ENCODE measurements at regions of chr7 and their contacts with region 1.

Region 1: DNA sequence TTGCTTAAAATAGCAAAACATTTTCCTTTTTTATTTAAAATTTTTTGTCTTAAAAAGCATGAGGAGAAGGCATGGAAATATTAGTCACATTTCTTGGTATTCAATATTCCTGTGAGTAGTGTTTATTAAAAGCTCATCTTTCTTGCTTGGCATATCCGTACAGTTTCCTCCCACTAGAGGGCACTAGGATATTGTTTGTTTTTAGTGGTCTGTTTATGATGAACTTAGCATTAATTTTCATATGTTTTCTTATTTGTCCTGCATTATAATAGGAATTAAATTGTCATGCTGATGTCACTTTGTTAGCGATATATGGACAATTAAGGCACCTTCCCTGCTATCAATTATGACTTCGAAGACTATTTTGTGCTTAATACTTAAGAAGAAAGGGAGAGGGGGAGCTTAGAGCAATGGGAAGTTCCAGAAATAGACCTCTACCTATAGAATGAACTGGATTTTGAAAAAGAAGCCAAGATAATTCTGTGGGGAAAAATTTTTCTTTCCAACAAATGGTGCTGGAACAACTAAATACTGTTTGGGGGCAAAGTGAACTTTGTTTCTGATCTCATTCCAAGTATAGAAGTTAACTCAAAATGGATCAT is 91.0 kb upstream of the STRIP2 start:
- DNase-seq: peak; percentile 68
- H3K4me3 ChIP-seq: no peak overlapping the region
- H3K27ac ChIP-seq: no peak overlapping the region
- H3K4me1 ChIP-seq: no peaks in the 10 kb centered on the region
- H3K27me3 ChIP-seq: no peaks in the 10 kb centered on the region
- CTCF ChIP-seq: peak; percentile 48 to 54
- POLR2A ChIP-seq: no peak

Region 2: GRCh38 chr7:129332284-129333035 is 10.7 kb before region 1 on chr7:
- CTCF ChIA-PET with region 1: interaction called, 40 read pairs
- POLR2A ChIA-PET with region 1: no interaction called
- dilution Hi-C with region 1: no loop called
- intact Hi-C with region 1: no loop called
- DNase-seq: peak; percentile 58
- H3K4me3 ChIP-seq: no peak overlapping the region
- H3K27ac ChIP-seq: peak overlapping the region; percentile 38
- H3K4me1 ChIP-seq: peaks cover 5% of the 10 kb centered on the region
- H3K27me3 ChIP-seq: no peaks in the 10 kb centered on the region
- CTCF ChIP-seq: no peak
- POLR2A ChIP-seq: no peak

Region 3: GRCh38 chr7:129359638-129360037 is 16.4 kb after region 1 on chr7:
- CTCF ChIA-PET with region 1: interaction called, 25 read pairs
- POLR2A ChIA-PET with region 1: no interaction called
- dilution Hi-C with region 1: no loop called
- intact Hi-C with region 1: no loop called
- DNase-seq: no peak
- H3K4me3 ChIP-seq: no peak overlapping the region
- H3K27ac ChIP-seq: no peak overlapping the region
- H3K4me1 ChIP-seq: no peaks in the 10 kb centered on the region
- H3K27me3 ChIP-seq: no peaks in the 10 kb centered on the region
- CTCF ChIP-seq: no peak
- POLR2A ChIP-seq: no peak

Region 4: DNA sequence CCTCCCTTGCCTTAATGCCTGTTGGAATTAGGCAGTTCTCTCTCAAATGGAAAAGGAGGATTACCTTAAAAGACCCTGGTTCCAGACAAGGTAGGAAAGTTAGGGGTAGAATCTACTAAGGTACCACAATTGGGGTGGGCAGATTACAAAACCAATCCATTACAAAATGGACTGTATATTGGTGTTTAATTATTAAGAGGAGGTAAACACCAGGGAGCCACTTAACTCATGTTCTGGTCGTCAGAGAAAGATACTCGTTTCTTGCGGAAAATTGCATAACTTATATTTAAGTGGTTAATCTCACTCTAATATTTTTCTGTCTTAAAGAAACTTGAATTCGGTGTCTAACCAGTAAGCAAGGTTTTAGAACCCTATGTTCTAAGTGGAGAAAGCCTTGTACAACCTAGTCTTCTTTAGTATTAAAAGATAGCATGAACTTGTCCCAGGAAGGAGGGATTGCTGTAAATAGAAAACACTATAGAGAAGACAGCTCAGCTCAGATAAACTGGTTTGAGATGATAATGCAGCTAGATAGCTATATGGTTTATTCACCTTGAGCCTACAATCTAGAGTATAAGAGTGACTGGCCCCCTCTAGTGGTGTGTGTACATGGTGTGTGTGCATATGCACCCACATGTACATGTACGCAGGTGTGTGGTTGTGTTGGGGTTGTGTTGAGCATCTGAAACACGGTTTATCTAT is 33.0 kb after region 1 on chr7:
- CTCF ChIA-PET with region 1: interaction called, 28 read pairs
- POLR2A ChIA-PET with region 1: no interaction called
- dilution Hi-C with region 1: no loop called
- intact Hi-C with region 1: no loop called
- DNase-seq: peak; percentile 39
- H3K4me3 ChIP-seq: no peak overlapping the region
- H3K27ac ChIP-seq: no peak overlapping the region
- H3K4me1 ChIP-seq: peaks cover 10% of the 10 kb centered on the region
- H3K27me3 ChIP-seq: no peaks in the 10 kb centered on the region
- CTCF ChIP-seq: peak; percentile 38 to 57
- POLR2A ChIP-seq: no peak

Region 5: DNA sequence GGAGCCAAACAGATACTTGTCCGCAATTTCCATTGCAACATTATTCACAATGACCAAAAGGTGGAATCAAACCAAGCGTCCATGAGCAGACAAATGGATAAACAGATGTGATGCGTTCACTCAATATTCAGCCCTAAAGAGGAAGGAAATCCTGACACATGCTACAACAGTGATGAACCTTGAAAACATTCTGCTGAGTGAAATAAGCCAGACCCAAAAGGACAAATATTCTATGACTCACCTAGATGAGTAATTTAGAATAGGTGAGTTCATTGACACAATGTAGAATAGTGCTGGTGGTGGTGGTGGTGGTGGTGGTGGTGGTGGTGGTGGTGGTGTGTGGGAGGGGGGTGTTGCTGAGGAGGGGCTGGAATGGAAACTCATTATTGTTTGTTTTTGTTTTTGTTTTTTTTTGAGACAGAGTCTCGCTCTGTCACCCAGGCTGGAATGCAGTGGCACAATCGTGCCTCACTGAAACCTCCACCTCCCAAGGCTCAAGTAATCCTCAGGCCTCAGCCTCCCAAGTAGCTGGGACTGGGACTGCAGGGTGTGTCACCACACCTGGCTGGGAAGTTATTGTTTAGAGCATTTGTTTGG is 187.7 kb after region 1 on chr7:
- CTCF ChIA-PET with region 1: no interaction called
- POLR2A ChIA-PET with region 1: no interaction called
- dilution Hi-C with region 1: no loop called
- intact Hi-C with region 1: no loop called
- DNase-seq: peak; percentile 47
- H3K4me3 ChIP-seq: no peak overlapping the region
- H3K27ac ChIP-seq: no peak overlapping the region
- H3K4me1 ChIP-seq: no peaks in the 10 kb centered on the region
- H3K27me3 ChIP-seq: no peaks in the 10 kb centered on the region
- CTCF ChIP-seq: no peak
- POLR2A ChIP-seq: no peak

Region 6: GRCh38 chr7:129635300-129636029 is 292.3 kb after region 1 on chr7:
- CTCF ChIA-PET with region 1: interaction called, 16 read pairs
- POLR2A ChIA-PET with region 1: no interaction called
- dilution Hi-C with region 1: no loop called
- intact Hi-C with region 1: no loop called
- DNase-seq: peak; percentile 76
- H3K4me3 ChIP-seq: no peak overlapping the region
- H3K27ac ChIP-seq: no peak overlapping the region
- H3K4me1 ChIP-seq: no peaks in the 10 kb centered on the region
- H3K27me3 ChIP-seq: no peaks in the 10 kb centered on the region
- CTCF ChIP-seq: peak; percentile 68 to 81
- POLR2A ChIP-seq: no peak

Region 7: GRCh38 chr7:129825496-129826267 is 482.5 kb after region 1 on chr7:
- CTCF ChIA-PET with region 1: interaction called, 14 read pairs
- POLR2A ChIA-PET with region 1: no interaction called
- dilution Hi-C with region 1: no loop called
- intact Hi-C with region 1: no loop called
- DNase-seq: peak; percentile 73
- H3K4me3 ChIP-seq: peak overlapping the region; percentile 53 to 75 (median 71)
- H3K27ac ChIP-seq: peak overlapping the region; percentile 59
- H3K4me1 ChIP-seq: peaks cover 8% of the 10 kb centered on the region
- H3K27me3 ChIP-seq: no peaks in the 10 kb centered on the region
- CTCF ChIP-seq: peak in 1 of 2 donors; percentile 72
- POLR2A ChIP-seq: no peak